Heart left ventricle (tissue), 16 donors: ENCODE measurements at regions of chr18 and their contacts with region 1.

Region 1: GRCh38 chr18:10591896-10592295 is 66.1 kb downstream of the NAPG start:
- DNase-seq: no peak
- ATAC-seq: no peak
- H3K4me3 ChIP-seq: no peak overlapping the region
- H3K27ac ChIP-seq: no peak overlapping the region
- H3K4me1 ChIP-seq: peaks cover 0 to 16% (median 0%) of the 10 kb centered on the region in 12 donors
- H3K27me3 ChIP-seq: no peaks in the 10 kb centered on the region
- CTCF ChIP-seq: no peak
- POLR2A ChIP-seq: no peak

Region 2: DNA sequence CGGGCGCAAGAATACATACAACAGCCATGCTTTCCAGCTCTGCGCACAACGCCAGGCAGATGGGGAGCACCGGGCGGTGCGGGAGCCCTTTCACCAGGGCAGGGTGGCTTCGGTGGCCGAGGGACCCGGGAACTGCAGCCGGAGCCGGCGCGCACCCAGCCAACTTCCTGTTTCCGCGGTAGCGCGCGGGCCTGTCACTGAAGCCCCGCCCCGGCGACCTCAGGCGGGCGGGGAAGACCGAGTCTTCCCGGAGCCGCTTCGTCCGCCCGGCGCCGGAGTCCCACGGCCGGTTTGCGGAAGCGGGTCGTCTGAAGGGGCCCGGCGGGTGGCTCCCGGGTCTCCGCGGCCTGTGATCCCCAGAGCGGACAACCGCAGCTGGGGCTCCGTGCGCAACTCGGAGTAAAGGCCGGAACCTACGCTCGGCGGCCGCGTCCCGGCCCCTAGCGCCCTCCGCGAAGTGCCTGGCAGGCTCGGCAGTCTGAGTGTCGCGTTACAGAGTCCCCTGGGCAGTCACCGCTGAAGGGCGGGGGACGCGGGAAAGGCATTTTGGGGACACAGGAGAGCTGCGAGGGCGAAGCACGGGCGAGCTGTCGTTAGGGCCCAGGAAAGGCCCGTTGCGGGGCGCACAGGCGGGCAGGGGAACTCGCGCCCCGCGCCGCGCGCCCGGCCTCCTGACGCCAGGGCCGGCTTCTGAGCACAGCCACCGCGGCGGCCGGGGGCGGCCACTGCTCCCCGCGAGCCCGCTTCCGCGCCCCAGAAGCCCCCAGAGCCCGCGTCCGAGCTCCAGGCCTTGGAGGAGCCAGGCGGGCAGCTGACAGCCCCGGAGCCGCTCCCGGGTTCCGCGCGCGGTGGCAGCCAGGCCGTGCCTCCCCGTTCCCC is 1316.5 kb after region 1 on chr18 and contains the start of gene MPPE1:
- intact Hi-C with region 1: loop called in 1 of 10 experiments (anchors 10 kb)
- DNase-seq: peak; percentile 92 to 96 (median 93)
- ATAC-seq: peak; percentile 79 to 97 (median 95)
- H3K4me3 ChIP-seq: peak within 1 kb of the TSS; percentile 62 to 95 (median 78)
- H3K27ac ChIP-seq: peak within 1 kb of the TSS; percentile 95 to 100 (median 98)
- H3K4me1 ChIP-seq: peaks cover 0 to 34% (median 17%) of the 10 kb centered on the region in 12 donors
- H3K27me3 ChIP-seq: no peaks in the 10 kb centered on the region
- CTCF ChIP-seq: peak in 3 of 12 donors; percentile 5 to 7 (median 5)
- POLR2A ChIP-seq: peak; percentile 65 to 83
- total RNA-seq, gene MPPE1: 17.8 to 45.5 (median 29.7) TPM